ENCODE measurements at regions of chrX and their contacts with region 1.

Region 1: GRCh38 chrX:83630662-83631061 is 122.6 kb downstream of the POU3F4 start:
- DNase-seq: no peak
- ATAC-seq: no peak
- H3K4me3 Mint-ChIP-seq: no peak overlapping the region
- H3K27ac Mint-ChIP-seq: no peak overlapping the region
- H3K4me1 Mint-ChIP-seq: peaks cover 4% of the 10 kb centered on the region
- H3K27me3 Mint-ChIP-seq: peaks cover 3% of the 10 kb centered on the region

Region 2: DNA sequence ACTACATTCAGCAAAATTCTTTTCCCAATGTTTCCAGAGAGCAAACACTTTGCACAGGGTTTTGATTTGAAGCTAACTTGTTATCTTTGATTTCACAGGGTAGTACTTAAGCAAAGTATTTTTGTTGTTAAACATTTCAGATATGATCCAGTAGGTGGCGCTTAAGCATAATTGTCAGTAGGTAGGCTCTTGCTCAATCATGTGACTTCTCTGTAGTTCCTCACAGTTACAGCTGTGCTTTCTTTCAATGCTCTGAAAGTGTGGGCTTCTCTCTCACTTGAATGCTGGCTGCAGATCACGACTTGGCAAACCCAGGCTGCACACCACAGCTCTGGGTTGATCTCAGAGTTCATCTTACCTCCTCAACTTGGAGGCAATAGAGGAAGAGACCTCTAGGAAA is 1412.3 kb before region 1 on chrX:
- CTCF ChIA-PET with region 1: no interaction called
- POLR2A ChIA-PET with region 1: no interaction called
- intact Hi-C with region 1: loop called in 1 of 2 experiments (anchors 5 kb)
- DNase-seq: no peak
- ATAC-seq: no peak
- H3K4me3 Mint-ChIP-seq: no peak overlapping the region
- H3K27ac Mint-ChIP-seq: no peak overlapping the region
- H3K4me1 Mint-ChIP-seq: no peaks in the 10 kb centered on the region
- H3K27me3 Mint-ChIP-seq: no peaks in the 10 kb centered on the region

Region 3: DNA sequence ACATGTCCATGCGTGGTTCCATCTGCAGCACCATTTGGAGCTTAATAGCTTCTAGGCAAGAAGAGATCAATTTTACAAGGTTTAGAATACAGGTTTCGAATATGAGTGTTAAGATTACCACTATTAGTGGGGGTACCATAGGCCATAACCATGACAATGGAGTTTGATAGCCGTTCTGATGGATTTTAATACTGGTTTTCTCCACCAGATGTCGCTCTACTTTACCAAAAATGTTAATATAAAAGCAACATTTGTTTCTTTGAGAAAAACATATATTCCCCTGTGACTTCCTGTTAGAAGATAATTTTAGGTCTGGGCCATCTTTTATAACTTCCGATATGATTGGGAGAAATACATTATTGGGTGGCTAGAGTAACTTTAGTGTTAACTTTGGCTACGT is 622.2 kb before region 1 on chrX:
- CTCF ChIA-PET with region 1: no interaction called
- POLR2A ChIA-PET with region 1: no interaction called
- intact Hi-C with region 1: loop called in 1 of 2 experiments (anchors 1 kb)
- DNase-seq: no peak
- ATAC-seq: no peak
- H3K4me3 Mint-ChIP-seq: no peak overlapping the region
- H3K27ac Mint-ChIP-seq: no peak overlapping the region
- H3K4me1 Mint-ChIP-seq: no peaks in the 10 kb centered on the region
- H3K27me3 Mint-ChIP-seq: no peaks in the 10 kb centered on the region

Region 4: DNA sequence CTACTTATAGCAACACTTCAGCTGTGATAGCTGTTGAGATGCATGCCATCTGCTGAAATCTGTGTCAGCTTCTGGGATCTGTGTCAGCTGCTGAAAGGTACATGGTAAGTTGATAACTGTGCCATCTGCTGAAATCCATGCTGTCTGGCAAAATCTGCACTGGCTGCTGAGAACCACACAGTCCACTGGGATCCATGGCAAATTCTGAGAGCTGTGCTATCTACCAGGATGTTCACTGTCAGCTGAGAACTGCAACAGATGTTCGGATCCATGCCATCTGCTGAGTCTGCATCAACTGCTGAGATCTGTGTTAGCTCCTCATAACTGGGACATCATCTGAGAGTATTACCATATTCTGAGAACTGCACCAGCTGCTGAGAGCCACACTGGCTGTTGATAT is 553.1 kb before region 1 on chrX:
- CTCF ChIA-PET with region 1: no interaction called
- POLR2A ChIA-PET with region 1: no interaction called
- intact Hi-C with region 1: no loop called
- DNase-seq: no peak
- ATAC-seq: no peak
- H3K4me3 Mint-ChIP-seq: no peak overlapping the region
- H3K27ac Mint-ChIP-seq: no peak overlapping the region
- H3K4me1 Mint-ChIP-seq: no peaks in the 10 kb centered on the region
- H3K27me3 Mint-ChIP-seq: no peaks in the 10 kb centered on the region

Region 5: DNA sequence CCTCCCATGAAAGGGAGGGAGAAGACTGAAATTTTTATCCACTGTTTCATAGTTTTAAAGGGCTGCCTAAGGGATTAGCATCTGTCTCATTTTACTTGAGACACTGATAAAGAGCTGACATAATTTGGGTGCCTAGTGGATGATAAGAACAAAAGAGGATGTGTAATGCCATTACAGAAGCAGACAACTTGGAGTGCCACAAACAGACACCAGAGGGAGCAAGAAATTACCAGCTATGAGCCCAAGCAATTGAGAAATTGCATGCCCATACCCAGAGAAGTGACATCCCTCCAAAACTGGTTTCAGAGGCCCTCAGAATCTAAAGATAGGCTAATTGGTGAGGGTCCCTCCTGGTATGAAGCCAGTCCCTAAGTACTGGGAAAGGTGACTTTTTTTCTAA is 161.1 kb before region 1 on chrX:
- CTCF ChIA-PET with region 1: interaction called, 5 read pairs
- POLR2A ChIA-PET with region 1: no interaction called
- intact Hi-C with region 1: loop called in 1 of 2 experiments (anchors 1 kb)
- DNase-seq: peak; percentile 8
- ATAC-seq: no peak
- H3K4me3 Mint-ChIP-seq: no peak overlapping the region
- H3K27ac Mint-ChIP-seq: no peak overlapping the region
- H3K4me1 Mint-ChIP-seq: no peaks in the 10 kb centered on the region
- H3K27me3 Mint-ChIP-seq: no peaks in the 10 kb centered on the region

Region 6: GRCh38 chrX:83593634-83594294 is 36.9 kb before region 1 on chrX:
- CTCF ChIA-PET with region 1: no interaction called
- POLR2A ChIA-PET with region 1: no interaction called
- intact Hi-C with region 1: no loop called
- DNase-seq: no peak
- ATAC-seq: no peak
- H3K4me3 Mint-ChIP-seq: no peak overlapping the region
- H3K27ac Mint-ChIP-seq: no peak overlapping the region
- H3K4me1 Mint-ChIP-seq: no peaks in the 10 kb centered on the region
- H3K27me3 Mint-ChIP-seq: no peaks in the 10 kb centered on the region

Region 7: GRCh38 chrX:83906921-83907320 is 276.3 kb after region 1 on chrX:
- CTCF ChIA-PET with region 1: no interaction called
- POLR2A ChIA-PET with region 1: no interaction called
- intact Hi-C with region 1: no loop called
- DNase-seq: no peak
- ATAC-seq: no peak
- H3K4me3 Mint-ChIP-seq: no peak overlapping the region
- H3K27ac Mint-ChIP-seq: no peak overlapping the region
- H3K4me1 Mint-ChIP-seq: no peaks in the 10 kb centered on the region
- H3K27me3 Mint-ChIP-seq: no peaks in the 10 kb centered on the region

Measured in activated CD4-positive, alpha-beta T cell treated with anti-CD3 and anti-CD28 coated beads for 36 hours (primary cell).